T-cell (primary cell): ENCODE measurements at regions of chr16 and their contacts with region 1.

Region 1: DNA sequence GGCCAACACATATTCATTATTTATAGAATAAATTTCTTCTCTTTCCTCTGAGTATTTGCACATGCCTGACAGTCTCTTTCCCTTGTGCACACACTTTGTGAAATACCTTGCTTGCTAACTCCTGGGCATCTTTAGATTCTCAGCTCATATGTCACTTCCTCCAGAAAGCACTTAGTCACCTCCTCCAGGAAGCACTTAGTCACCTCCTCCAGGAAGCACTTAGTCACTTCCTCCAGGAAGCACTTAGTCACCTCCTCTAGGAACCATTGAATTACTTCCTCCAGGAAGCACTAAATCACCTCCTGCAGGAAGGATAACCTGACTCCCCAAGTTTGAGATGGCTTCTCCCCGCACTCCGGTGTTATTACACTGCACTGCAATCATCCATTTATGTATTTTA is 462.5 kb upstream of the EEF2KMT start:
- DNase-seq: no peak
- ATAC-seq: no peak
- H3K4me3 ChIP-seq: no peak overlapping the region
- H3K4me3 Mint-ChIP-seq: no peak overlapping the region
- H3K27ac ChIP-seq: no peak overlapping the region
- H3K27ac Mint-ChIP-seq: no peak overlapping the region
- H3K4me1 ChIP-seq: no peaks in the 10 kb centered on the region
- H3K4me1 Mint-ChIP-seq: no peaks in the 10 kb centered on the region
- H3K27me3 ChIP-seq: no peaks in the 10 kb centered on the region
- H3K27me3 Mint-ChIP-seq: no peaks in the 10 kb centered on the region

Region 2: GRCh38 chr16:5533321-5533888 is 26.7 kb before region 1 on chr16:
- CTCF ChIA-PET with region 1: no interaction called
- POLR2A ChIA-PET with region 1: interaction called in 1 of 2 experiments, 15 read pairs
- DNase-seq: no peak
- ATAC-seq: no peak
- H3K4me3 ChIP-seq: no peak overlapping the region
- H3K4me3 Mint-ChIP-seq: no peak overlapping the region
- H3K27ac ChIP-seq: no peak overlapping the region
- H3K27ac Mint-ChIP-seq: no peak overlapping the region
- H3K4me1 ChIP-seq: no peaks in the 10 kb centered on the region
- H3K4me1 Mint-ChIP-seq: no peaks in the 10 kb centered on the region
- H3K27me3 ChIP-seq: peaks cover 0 to 4% of the 10 kb centered on the region in 2 experiments
- H3K27me3 Mint-ChIP-seq: peaks cover 2 to 3% of the 10 kb centered on the region in 2 donors

Region 3: DNA sequence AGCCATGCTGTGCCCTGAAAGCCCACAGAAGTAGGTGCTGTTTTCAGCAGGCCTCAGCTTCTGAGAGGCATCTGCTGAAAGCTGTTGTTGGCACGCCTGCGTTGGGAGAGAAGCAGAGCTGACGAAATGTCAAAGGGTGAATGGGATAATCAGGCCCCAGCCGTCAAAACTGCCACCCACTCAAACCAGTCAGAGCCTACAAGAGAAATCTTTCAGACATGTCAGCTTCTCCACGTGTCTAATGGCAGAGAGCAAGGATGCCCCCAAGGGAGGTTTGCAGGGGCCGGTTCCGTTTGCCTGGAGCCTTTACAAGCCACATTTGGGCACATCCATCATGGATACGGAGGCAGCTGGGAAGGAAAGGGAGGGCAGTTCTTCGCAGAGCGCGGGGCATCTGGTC is 105.8 kb after region 1 on chr16:
- CTCF ChIA-PET with region 1: no interaction called
- POLR2A ChIA-PET with region 1: no interaction called
- DNase-seq: no peak
- ATAC-seq: no peak
- H3K4me3 ChIP-seq: no peak overlapping the region
- H3K4me3 Mint-ChIP-seq: no peak overlapping the region
- H3K27ac ChIP-seq: no peak overlapping the region
- H3K27ac Mint-ChIP-seq: no peak overlapping the region
- H3K4me1 ChIP-seq: no peaks in the 10 kb centered on the region
- H3K4me1 Mint-ChIP-seq: no peaks in the 10 kb centered on the region
- H3K27me3 ChIP-seq: peaks cover 0 to 3% of the 10 kb centered on the region in 2 experiments
- H3K27me3 Mint-ChIP-seq: peaks cover 0 to 3% of the 10 kb centered on the region in 2 donors

Region 4: GRCh38 chr16:5820472-5820871 is 260.4 kb after region 1 on chr16:
- CTCF ChIA-PET with region 1: no interaction called
- POLR2A ChIA-PET with region 1: interaction called in 1 of 2 experiments, 14 read pairs
- DNase-seq: no peak
- ATAC-seq: no peak
- H3K4me3 ChIP-seq: no peak overlapping the region
- H3K4me3 Mint-ChIP-seq: no peak overlapping the region
- H3K27ac ChIP-seq: no peak overlapping the region
- H3K27ac Mint-ChIP-seq: no peak overlapping the region
- H3K4me1 ChIP-seq: no peaks in the 10 kb centered on the region
- H3K4me1 Mint-ChIP-seq: no peaks in the 10 kb centered on the region
- H3K27me3 ChIP-seq: no peaks in the 10 kb centered on the region
- H3K27me3 Mint-ChIP-seq: no peaks in the 10 kb centered on the region